Calu3 (cell line): ENCODE measurements at regions of chr14 and their contacts with region 1.

Region 1: DNA sequence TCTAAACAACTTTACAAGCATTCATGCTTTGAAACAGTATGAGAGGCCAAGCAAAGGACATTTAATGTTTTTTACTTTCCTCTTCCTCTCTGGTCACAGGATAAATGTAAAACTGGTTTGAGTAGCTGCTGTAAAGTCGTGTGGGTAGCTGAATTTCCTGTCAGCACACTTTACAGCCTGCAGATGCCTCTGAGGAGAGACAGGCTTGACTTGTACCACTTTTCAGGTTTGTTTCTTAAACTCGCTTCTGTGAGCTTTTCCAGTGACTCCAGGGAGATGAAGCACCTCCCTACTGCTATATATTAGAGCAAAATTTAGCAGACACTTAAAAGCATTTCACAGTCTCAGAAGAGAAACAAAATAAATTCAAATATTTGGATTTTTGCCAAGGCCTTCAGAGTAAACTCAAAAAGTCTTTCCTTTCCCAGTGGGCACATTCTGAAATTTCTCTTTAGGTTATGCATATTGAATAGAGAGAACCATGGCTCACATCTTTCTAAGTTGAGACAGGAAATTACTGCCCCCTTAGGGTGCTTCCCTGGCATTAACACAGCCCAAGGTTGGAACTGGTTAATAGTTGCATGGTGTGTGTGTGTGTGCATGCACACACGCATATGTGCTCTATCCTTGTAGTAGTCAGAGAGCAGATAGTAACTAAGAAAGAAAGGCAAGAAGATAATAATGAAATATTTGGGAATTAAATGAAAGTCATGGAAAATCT is 557.3 kb upstream of the MIS18BP1 start:
- DNase-seq: no peak
- H3K4me3 Mint-ChIP-seq: no peak overlapping the region
- H3K27ac Mint-ChIP-seq: no peak overlapping the region
- H3K4me1 Mint-ChIP-seq: no peaks in the 10 kb centered on the region
- H3K27me3 Mint-ChIP-seq: no peaks in the 10 kb centered on the region
- CTCF ChIP-seq: no peak

Region 2: GRCh38 chr14:45679852-45680251 is 130.5 kb before region 1 on chr14:
- CTCF ChIA-PET with region 1: no interaction called
- intact Hi-C with region 1: loop called (anchors 10 kb)
- DNase-seq: no peak
- H3K4me3 Mint-ChIP-seq: no peak overlapping the region
- H3K27ac Mint-ChIP-seq: no peak overlapping the region
- H3K4me1 Mint-ChIP-seq: no peaks in the 10 kb centered on the region
- H3K27me3 Mint-ChIP-seq: no peaks in the 10 kb centered on the region
- CTCF ChIP-seq: no peak